CD8-positive, alpha-beta T cell (primary cell): ENCODE measurements at regions of chr3 and their contacts with region 1.

Region 1: DNA sequence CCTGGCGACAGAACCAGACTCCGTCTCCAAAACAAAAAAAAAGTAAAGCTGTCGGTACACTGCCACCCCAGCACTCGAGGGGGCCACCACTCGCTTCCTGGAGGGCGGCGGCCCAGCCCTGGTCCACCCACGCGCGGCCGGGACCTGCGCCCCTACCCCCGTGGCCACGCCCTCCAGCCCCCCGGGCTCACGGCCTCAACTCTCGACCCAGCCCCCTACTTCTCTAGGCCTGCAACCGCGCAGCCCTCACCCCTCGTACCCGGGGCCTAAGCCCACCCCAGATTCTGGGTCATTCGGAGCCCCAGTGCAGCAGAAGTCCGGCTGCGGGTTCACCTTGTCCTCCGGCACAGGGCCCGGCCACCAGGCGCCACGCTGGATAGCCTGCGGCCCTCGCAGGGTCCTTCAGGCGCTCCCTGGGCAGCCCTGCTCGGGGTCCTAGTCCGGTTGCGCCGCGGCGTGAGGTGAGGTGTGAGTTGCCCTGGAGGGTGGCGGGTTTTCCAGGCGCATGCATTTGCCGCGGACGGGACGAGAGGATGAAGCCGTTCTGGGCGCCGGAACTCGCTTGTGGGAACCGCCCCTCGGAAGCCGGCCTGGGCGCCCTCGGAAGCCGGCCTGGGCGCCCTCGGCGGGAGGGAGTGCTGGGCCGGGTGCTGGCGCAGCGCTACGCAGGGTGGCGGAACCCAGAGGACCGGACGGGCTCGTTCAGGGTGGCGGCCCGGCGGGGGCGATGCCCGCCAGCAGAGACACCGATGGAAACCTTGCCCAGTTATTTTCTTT is 32.3 kb downstream of the SPINK8 start:
- DNase-seq: peak; percentile 82 to 94 (median 90)
- ATAC-seq: peak; percentile 85
- H3K4me3 ChIP-seq: peak within 1 kb of the TSS; percentile 85 to 97
- H3K4me3 Mint-ChIP-seq: peak within 1 kb of the TSS; percentile 87
- H3K27ac ChIP-seq: peak within 1 kb of the TSS; percentile 85 to 90
- H3K27ac Mint-ChIP-seq: peak within 1 kb of the TSS; percentile 91
- H3K4me1 ChIP-seq: peaks cover 23% of the 10 kb centered on the region
- H3K4me1 Mint-ChIP-seq: peaks cover 34% of the 10 kb centered on the region
- H3K27me3 ChIP-seq: no peaks in the 10 kb centered on the region
- H3K27me3 Mint-ChIP-seq: no peaks in the 10 kb centered on the region
- CTCF ChIP-seq: no peak

Region 2: GRCh38 chr3:48088749-48089466 is 212.3 kb before region 1 on chr3:
- CTCF ChIA-PET with region 1: no interaction called
- POLR2A ChIA-PET with region 1: interaction called, 3 read pairs
- intact Hi-C with region 1: loop called in 1 of 2 experiments (anchors 5 kb)
- DNase-seq: peak; percentile 89 to 97 (median 94)
- ATAC-seq: peak; percentile 91
- H3K4me3 ChIP-seq: peak overlapping the region; percentile 80 to 100
- H3K4me3 Mint-ChIP-seq: peak overlapping the region; percentile 96
- H3K27ac ChIP-seq: peak overlapping the region; percentile 86 to 95
- H3K27ac Mint-ChIP-seq: peak overlapping the region; percentile 98
- H3K4me1 ChIP-seq: peaks cover 18% of the 10 kb centered on the region
- H3K4me1 Mint-ChIP-seq: peaks cover 33% of the 10 kb centered on the region
- H3K27me3 ChIP-seq: no peaks in the 10 kb centered on the region
- H3K27me3 Mint-ChIP-seq: no peaks in the 10 kb centered on the region
- CTCF ChIP-seq: no peak

Region 3: DNA sequence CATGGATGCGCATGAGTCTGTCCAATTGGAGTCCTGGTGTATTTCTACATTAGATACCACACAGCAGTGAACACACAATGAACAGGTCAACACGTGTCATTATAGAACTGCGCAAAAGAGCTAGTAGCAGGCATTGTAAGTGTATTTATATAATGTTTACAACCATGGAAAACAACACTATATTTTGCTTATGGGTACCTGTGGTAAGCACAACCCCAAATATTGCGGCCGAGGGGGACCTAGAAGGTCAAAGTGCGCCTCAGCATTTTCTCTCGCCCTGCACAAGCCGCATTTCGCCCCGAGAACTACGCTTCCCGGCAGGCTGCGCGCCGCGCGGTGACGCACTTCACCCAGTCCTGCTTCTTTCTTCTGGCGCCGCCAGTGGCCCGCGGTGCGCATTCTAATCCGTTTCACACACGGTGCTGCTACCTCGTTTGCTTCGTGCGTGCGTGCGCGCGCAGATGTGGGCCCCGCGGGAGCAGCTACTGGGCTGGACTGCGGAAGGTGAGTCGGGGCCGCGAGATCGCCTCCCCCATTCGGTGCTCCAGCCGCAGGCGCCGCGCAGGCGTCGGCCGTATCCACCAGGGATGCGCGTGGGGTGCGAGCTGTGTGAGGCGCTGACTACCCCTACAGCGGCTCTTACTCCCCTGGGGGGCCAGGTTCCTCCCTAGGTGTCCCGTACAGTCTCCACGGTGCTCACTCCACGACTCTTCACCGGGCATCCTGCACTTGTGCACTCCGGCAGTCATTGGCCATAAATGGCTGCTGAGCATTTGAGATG is 60.3 kb before region 1 on chr3 and contains the start of gene ZNF589:
- CTCF ChIA-PET with region 1: no interaction called
- POLR2A ChIA-PET with region 1: interaction called, 19 read pairs
- intact Hi-C with region 1: loop called (anchors 1 to 2 kb)
- DNase-seq: peak; percentile 91 to 97 (median 94)
- ATAC-seq: peak; percentile 97
- H3K4me3 ChIP-seq: peak within 1 kb of the TSS; percentile 66 to 90
- H3K4me3 Mint-ChIP-seq: peak within 1 kb of the TSS; percentile 92
- H3K27ac ChIP-seq: peak within 1 kb of the TSS; percentile 62 to 85
- H3K27ac Mint-ChIP-seq: peak within 1 kb of the TSS; percentile 93
- H3K4me1 ChIP-seq: peaks cover 23% of the 10 kb centered on the region
- H3K4me1 Mint-ChIP-seq: peaks cover 28% of the 10 kb centered on the region
- H3K27me3 ChIP-seq: no peaks in the 10 kb centered on the region
- H3K27me3 Mint-ChIP-seq: no peaks in the 10 kb centered on the region
- CTCF ChIP-seq: peak; percentile 31
- total RNA-seq, gene ZNF589: 18.9 to 20.9 TPM

Region 4: DNA sequence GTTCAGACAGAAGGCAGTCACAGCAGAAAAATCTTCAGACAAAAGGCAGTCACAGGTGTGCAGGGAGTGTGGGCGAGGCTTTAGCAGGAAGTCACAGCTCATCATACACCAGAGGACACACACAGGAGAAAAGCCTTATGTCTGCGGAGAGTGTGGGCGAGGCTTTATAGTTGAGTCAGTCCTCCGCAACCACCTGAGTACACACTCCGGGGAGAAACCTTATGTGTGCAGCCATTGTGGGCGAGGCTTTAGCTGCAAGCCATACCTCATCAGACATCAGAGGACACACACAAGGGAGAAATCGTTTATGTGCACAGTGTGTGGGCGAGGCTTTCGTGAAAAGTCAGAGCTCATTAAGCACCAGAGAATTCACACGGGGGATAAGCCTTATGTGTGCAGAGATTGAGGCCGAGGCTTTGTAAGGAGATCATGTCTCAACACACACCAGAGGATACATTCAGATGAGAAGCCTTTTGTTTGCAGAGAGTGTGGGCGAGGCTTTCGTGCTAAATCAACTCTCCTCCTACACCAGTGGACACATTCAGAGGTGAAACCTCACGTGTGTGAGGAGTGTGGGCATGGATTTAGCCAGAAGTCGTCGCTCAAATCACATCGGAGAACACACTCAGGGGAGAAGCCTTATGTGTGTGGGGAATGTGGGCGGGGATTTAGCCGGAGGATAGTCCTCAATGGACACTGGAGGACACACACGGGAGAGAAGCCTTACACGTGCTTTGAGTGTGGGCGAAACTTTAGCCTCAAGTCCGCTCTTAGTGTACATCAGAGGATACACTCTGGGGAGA is 32.6 kb before region 1 on chr3:
- CTCF ChIA-PET with region 1: interaction called, 4 read pairs
- POLR2A ChIA-PET with region 1: interaction called, 5 read pairs
- intact Hi-C with region 1: loop called (anchors 2 kb)
- DNase-seq: peak; percentile 46 to 92 (median 76)
- ATAC-seq: peak; percentile 97
- H3K4me3 ChIP-seq: peak overlapping the region; percentile 2 to 32
- H3K4me3 Mint-ChIP-seq: peak overlapping the region; percentile 75
- H3K27ac ChIP-seq: peak overlapping the region; percentile 40 to 45
- H3K27ac Mint-ChIP-seq: peak overlapping the region; percentile 94
- H3K4me1 ChIP-seq: peaks cover 16% of the 10 kb centered on the region
- H3K4me1 Mint-ChIP-seq: peaks cover 33% of the 10 kb centered on the region
- H3K27me3 ChIP-seq: no peaks in the 10 kb centered on the region
- H3K27me3 Mint-ChIP-seq: no peaks in the 10 kb centered on the region
- CTCF ChIP-seq: no peak

Region 5: DNA sequence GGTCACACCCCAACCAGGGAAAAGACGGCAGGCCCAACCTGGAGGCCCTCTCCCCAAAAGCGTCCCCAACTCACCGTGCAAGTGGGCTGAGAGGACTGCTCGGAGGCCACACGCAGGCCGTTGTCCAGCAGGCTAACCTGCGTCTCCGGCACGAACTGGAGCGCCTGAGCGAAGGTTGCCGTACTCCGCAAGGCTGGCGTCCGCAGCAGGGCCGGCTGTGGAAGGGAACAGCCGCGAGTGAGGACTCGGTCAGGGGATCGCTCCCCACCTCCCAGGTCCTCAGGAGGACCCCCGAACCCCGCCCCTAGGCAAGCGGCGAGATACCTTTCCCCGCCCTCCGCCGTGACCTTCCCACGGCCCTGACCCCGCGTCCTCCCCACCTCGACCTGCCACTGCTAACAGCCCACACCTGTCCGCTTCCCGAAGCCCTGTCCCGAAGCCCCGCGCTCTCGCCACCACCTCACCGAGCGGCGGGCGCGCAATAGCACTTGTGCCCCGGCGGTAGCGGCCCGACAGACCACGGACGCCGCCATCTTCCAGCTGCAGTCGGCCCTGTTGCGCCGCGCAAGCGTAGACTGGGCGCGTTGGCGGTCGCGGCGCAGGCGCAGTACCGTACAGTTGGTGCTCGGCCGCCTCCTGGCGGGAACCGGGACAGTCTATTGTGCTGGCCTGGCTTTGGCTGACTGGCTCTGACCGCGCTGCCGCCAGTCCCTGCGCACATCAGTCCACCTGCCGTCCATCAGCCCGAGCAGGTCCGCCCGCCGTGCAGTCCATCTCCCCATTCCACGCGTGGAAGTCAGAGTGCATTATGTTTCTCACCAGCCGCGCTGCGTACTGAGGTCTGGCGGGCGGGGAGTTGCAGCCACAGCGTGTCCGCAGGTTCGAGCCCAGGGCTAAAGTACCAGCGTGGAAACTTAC is 308.1 kb after region 1 on chr3 and contains the start of gene UQCRC1:
- CTCF ChIA-PET with region 1: no interaction called
- POLR2A ChIA-PET with region 1: no interaction called
- intact Hi-C with region 1: loop called in 1 of 2 experiments (anchors 1 kb)
- DNase-seq: peak; percentile 82 to 96 (median 90)
- ATAC-seq: peak; percentile 99
- H3K4me3 ChIP-seq: peak within 1 kb of the TSS; percentile 78 to 99
- H3K4me3 Mint-ChIP-seq: peak within 1 kb of the TSS; percentile 99
- H3K27ac ChIP-seq: peak within 1 kb of the TSS; percentile 68 to 87
- H3K27ac Mint-ChIP-seq: peak within 1 kb of the TSS; percentile 98
- H3K4me1 ChIP-seq: peaks cover 15% of the 10 kb centered on the region
- H3K4me1 Mint-ChIP-seq: peaks cover 16% of the 10 kb centered on the region
- H3K27me3 ChIP-seq: no peaks in the 10 kb centered on the region
- H3K27me3 Mint-ChIP-seq: no peaks in the 10 kb centered on the region
- CTCF ChIP-seq: peak; percentile 78
- total RNA-seq, gene UQCRC1: 84.2 to 92.5 TPM